Endothelial cell of umbilical vein (primary cell): ENCODE measurements at regions of chr4 and their contacts with region 1.

Region 1: DNA sequence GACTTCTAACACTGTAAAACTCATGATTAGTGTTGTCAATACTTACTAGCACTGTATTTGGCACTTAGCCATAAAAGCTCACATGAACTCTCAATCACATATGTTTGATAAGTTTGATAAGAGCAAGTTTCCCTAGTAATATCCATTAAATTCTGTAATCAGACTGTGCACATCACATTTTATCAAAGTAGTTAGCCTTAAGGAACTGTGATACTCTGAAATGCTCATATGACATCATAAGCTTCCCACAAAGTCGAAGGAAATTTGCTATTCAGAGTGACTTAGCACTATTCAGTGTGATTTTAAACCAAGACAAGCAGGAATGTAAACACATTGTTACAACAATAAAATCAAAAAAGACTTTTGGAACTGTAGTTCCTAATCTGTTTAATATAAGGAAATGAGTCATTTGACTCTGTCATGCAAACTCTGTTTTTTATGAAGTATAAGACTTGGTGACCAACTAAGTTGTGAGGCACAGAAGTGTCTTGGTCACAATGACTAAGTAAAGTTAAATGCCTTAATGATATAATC is 6.7 kb downstream of the SLC7A11 start:
- DNase-seq: peak; percentile 96
- H3K4me3 ChIP-seq: no peak overlapping the region
- H3K27ac ChIP-seq: peak overlapping the region; percentile 89
- H3K4me1 ChIP-seq: peaks cover 50% of the 10 kb centered on the region
- H3K27me3 ChIP-seq: no peaks in the 10 kb centered on the region
- CTCF ChIP-seq: no peak
- POLR2A ChIP-seq: peak; percentile 44

Region 2: GRCh38 chr4:138053641-138054301 is 181.7 kb before region 1 on chr4:
- CTCF ChIA-PET with region 1: no interaction called
- POLR2A ChIA-PET with region 1: no interaction called
- dilution Hi-C with region 1: no loop called
- intact Hi-C with region 1: loop called (anchors 2 kb)
- DNase-seq: peak; percentile 93
- H3K4me3 ChIP-seq: peak overlapping the region in 1 of 3 experiments; percentile 6
- H3K27ac ChIP-seq: peak overlapping the region; percentile 92
- H3K4me1 ChIP-seq: peaks cover 63% of the 10 kb centered on the region
- H3K27me3 ChIP-seq: no peaks in the 10 kb centered on the region
- CTCF ChIP-seq: no peak
- POLR2A ChIP-seq: peak; percentile 64

Region 3: GRCh38 chr4:138222046-138222445 is 13.4 kb before region 1 on chr4:
- CTCF ChIA-PET with region 1: interaction called, 5 read pairs
- POLR2A ChIA-PET with region 1: interaction called, 3 read pairs
- dilution Hi-C with region 1: no loop called
- intact Hi-C with region 1: loop called (anchors 1 kb)
- DNase-seq: peak; percentile 79
- H3K4me3 ChIP-seq: no peak overlapping the region
- H3K27ac ChIP-seq: peak overlapping the region; percentile 67
- H3K4me1 ChIP-seq: peaks cover 56% of the 10 kb centered on the region
- H3K27me3 ChIP-seq: no peaks in the 10 kb centered on the region
- CTCF ChIP-seq: peak in 1 of 2 donors; percentile 10
- POLR2A ChIP-seq: peak; percentile 31